ENCODE measurements at regions of chr4 and their contacts with region 1.

Region 1: DNA sequence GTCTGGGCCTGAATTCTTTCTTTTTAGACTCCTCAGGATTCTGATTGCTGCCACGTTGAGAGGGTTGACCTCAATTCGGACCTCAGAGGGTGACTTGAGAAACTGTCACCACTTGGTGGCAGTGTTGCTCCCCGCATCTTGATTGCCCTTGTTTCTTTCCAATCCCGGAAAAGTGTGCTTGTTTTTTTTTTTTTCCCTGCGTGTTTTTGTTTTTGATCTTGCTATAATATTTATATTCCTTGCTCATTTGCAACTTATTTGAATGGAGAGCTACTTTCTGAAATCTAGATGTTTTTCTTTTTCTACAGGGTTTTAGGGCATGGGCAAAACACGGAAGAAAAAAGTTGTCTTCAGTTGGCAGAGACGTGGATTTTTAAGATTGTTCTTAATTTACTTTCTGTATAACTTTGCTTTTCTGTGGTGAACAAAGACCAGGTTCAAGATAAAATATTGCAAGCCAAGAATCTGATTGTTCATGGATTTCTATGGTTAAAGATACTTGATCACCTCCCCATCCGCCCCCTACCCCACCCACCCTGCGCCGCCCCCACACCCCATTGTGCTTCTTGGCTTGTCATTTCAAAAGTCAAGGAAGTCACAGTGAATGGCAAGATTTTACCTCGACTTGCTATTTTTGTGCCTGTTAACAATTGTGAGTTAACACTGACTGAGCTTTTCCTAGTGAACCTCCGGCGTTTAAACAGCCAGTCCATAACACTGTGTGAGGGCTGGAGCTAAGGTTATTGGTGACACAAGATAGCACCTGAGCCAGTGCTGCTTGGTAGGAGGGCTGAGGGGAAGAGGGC is 102.1 kb downstream of the PTTG2 start:
- DNase-seq: peak; percentile 74
- ATAC-seq: peak; percentile 92
- H3K4me3 ChIP-seq: peak overlapping the region; percentile 41
- H3K27ac ChIP-seq: no peak overlapping the region
- H3K4me1 ChIP-seq: no peaks in the 10 kb centered on the region
- H3K27me3 ChIP-seq: no peaks in the 10 kb centered on the region
- CTCF ChIP-seq: peak; percentile 84

Region 2: GRCh38 chr4:38160487-38161207 is 98.4 kb after region 1 on chr4:
- intact Hi-C with region 1: loop called (anchors 10 kb)
- DNase-seq: no peak
- ATAC-seq: peak; percentile 80
- H3K4me3 ChIP-seq: no peak overlapping the region
- H3K27ac ChIP-seq: no peak overlapping the region
- H3K4me1 ChIP-seq: peaks cover 1% of the 10 kb centered on the region
- H3K27me3 ChIP-seq: no peaks in the 10 kb centered on the region
- CTCF ChIP-seq: no peak

Region 3: DNA sequence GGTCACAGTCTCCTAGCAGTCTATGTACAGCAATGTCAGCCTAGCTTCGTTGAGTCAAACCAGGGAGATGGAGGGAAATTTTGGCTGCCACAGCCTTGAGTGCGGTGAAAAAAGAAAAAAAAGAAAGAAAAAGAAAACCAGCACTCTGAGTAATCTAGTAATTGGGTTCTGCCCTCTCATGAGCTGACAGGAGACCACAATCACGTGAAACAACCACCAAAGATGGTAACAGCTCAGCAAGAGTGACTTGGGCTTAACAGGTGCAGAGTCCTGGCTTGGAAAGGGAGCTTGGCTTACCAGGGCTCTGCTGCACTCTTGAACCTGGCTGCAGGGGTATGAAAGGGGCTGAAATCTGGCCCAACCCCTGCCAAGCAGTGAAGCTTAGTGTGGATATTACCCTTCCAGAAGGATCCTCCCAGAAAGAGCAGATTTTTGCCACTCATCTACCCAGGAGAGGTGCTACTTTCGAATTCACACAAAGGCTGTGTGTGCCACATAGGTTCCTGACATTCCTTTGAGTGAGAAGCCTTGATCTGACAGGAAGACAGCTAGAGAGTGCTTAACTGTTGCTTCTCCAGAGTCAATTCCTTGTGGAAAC is 248.3 kb after region 1 on chr4:
- intact Hi-C with region 1: no loop called
- DNase-seq: no peak
- ATAC-seq: peak; percentile 35
- H3K4me3 ChIP-seq: no peak overlapping the region
- H3K27ac ChIP-seq: no peak overlapping the region
- H3K4me1 ChIP-seq: no peaks in the 10 kb centered on the region
- H3K27me3 ChIP-seq: no peaks in the 10 kb centered on the region
- CTCF ChIP-seq: no peak

Region 4: GRCh38 chr4:38612646-38613414 is 550.5 kb after region 1 on chr4:
- intact Hi-C with region 1: no loop called
- DNase-seq: no peak
- ATAC-seq: peak; percentile 14
- H3K4me3 ChIP-seq: no peak overlapping the region
- H3K27ac ChIP-seq: no peak overlapping the region
- H3K4me1 ChIP-seq: peaks cover 33% of the 10 kb centered on the region
- H3K27me3 ChIP-seq: no peaks in the 10 kb centered on the region
- CTCF ChIP-seq: no peak